Panc1 (cell line): ENCODE measurements at regions of chr1 and their contacts with region 1.

Region 1: DNA sequence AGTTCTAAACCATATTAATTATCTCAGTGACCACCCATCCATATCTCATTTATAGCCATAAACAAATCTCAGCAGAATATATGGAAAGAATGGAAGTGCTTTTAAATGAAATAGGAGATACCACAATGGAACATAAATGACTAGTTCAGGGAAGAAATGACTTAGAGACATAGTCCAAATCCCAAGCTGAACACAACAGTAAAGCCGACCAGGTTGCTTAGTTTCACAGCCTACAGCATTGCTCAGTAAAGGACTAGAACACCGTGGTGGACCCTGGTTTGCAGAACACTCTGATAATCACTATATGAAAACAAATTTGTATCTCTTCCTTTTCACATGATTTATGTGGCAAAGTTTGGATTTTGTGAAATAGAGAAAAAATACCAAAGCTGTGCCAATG is 40.3 kb downstream of the MYSM1 start:
- DNase-seq: no peak
- ATAC-seq: no peak
- H3K4me3 ChIP-seq: no peak overlapping the region
- H3K27ac ChIP-seq: no peak overlapping the region
- H3K4me1 ChIP-seq: no peaks in the 10 kb centered on the region
- H3K27me3 ChIP-seq: no peaks in the 10 kb centered on the region
- CTCF ChIP-seq: no peak

Region 2: GRCh38 chr1:58358346-58358745 is 301.2 kb before region 1 on chr1:
- CTCF ChIA-PET with region 1: no interaction called
- POLR2A ChIA-PET with region 1: interaction called, 11 read pairs
- in situ Hi-C with region 1: no loop called
- intact Hi-C with region 1: no loop called
- DNase-seq: no peak
- ATAC-seq: peak; percentile 56; the same call in 1 of the 2 replicates
- H3K4me3 ChIP-seq: no peak overlapping the region
- H3K27ac ChIP-seq: no peak overlapping the region
- H3K4me1 ChIP-seq: 0 out of 2 replicates have a peak, but pooled peaks cover 3% of the 10 kb centered on the region
- H3K27me3 ChIP-seq: peaks cover 12% of the 10 kb centered on the region
- CTCF ChIP-seq: no peak